ENCODE measurements at regions of chr7 and their contacts with region 1.

Region 1: DNA sequence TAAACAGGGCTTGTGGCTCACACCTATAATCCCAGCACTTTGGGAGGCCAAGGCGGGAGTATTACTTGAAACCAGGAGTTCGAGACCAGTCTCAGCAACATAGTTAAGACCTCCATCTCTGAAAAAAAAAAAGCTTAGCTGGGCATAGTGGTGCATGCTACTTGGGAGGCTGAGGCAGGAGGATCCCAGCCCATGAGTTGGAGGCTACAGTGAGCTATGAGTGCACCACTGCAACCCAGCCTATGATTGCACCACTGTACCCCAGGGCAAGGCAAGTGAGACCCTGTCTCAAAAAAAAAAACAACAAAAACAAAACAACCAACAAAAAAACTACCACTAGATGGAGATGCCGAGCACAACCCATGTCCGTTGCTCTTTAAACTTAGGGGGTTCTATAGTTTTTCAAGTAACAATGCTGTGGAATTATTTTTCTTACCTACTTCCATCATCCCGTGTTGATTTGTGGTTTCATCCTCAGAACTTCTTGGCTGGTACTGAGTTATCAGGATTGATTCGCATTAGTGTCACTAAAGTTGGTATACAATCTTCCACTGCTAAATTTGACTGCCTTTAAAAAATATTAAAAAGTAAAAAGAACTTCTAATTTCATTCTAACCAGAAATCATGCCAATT is 12.2 kb upstream of the REPIN1 start:
- DNase-seq: no peak
- ATAC-seq: no peak
- H3K4me3 ChIP-seq: no peak overlapping the region
- H3K27ac ChIP-seq: peak overlapping the region; percentile 57
- H3K4me1 ChIP-seq: peaks cover 30% of the 10 kb centered on the region
- H3K27me3 ChIP-seq: no peaks in the 10 kb centered on the region
- CTCF ChIP-seq: peak; percentile 87

Region 2: DNA sequence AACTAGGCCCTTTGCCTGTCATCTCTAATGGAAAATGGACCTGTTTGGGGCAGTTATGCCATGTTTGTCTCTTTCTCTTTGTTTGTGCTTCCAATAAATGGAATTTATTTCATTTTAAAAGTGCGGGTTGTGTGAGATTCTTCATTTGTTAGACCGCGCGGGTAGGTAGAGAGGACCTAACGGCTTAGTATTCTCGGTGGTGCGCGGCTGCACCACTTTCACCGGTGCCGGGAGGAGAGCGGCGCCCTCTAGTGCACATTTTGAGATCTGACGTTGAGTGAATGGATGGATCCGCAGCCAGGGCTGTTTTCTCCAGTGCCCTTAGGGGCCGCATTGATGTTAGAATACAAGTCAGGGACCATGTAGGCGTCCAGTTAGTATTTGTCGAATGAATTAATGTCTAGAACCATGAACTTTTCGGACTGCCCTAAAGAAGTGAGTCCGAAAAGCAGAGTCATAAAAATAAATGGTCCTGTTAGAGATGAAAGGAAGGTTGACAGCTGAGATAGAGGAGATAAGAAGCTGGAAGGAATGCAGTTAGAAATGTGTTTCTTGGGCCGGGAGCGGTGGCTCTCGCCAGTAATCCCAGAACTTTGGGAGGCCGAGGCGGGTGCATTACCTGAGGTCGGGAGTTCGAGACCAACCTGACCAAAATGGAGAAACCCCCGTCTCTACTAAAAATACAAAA is 64.8 kb after region 1 on chr7:
- CTCF ChIA-PET with region 1: interaction called, 7 read pairs
- POLR2A ChIA-PET with region 1: interaction called, 14 read pairs
- in situ Hi-C with region 1: no loop called
- intact Hi-C with region 1: loop called (anchors 2 kb)
- DNase-seq: peak; percentile 71
- ATAC-seq: peak; percentile 100
- H3K4me3 ChIP-seq: no peak overlapping the region
- H3K27ac ChIP-seq: peak overlapping the region; percentile 67
- H3K4me1 ChIP-seq: peaks cover 7% of the 10 kb centered on the region; the same call in 1 of the 2 replicates
- H3K27me3 ChIP-seq: no peaks in the 10 kb centered on the region
- CTCF ChIP-seq: peak; percentile 97